Esophagus squamous epithelium (tissue), 5 donors: ENCODE measurements at regions of chr2 and their contacts with region 1.

Region 1: GRCh38 chr2:73984203-73984921 is at the start of gene TET3:
- DNase-seq: no peak
- H3K4me3 ChIP-seq: peak within 1 kb of the TSS; percentile 71 to 89 (median 78)
- H3K27ac ChIP-seq: peak within 1 kb of the TSS; percentile 91 to 99 (median 97)
- H3K4me1 ChIP-seq: peaks cover 63 to 91% (median 67%) of the 10 kb centered on the region in 3 donors
- H3K27me3 ChIP-seq: no peaks in the 10 kb centered on the region
- CTCF ChIP-seq: no peak
- POLR2A ChIP-seq: no peak
- total RNA-seq, gene TET3: 6.6 to 20.2 (median 16.2) TPM

Region 2: GRCh38 chr2:73896362-73897239 is 87.8 kb before region 1 on chr2:
- intact Hi-C with region 1: no loop called
- DNase-seq: no peak
- H3K4me3 ChIP-seq: peak overlapping the region; percentile 12 to 58 (median 41)
- H3K27ac ChIP-seq: peak overlapping the region; percentile 47 to 86 (median 80)
- H3K4me1 ChIP-seq: peaks cover 0 to 10% (median 0%) of the 10 kb centered on the region in 3 donors
- H3K27me3 ChIP-seq: no peaks in the 10 kb centered on the region
- CTCF ChIP-seq: no peak
- POLR2A ChIP-seq: no peak

Region 3: GRCh38 chr2:73907840-73908452 is 76.4 kb before region 1 on chr2:
- intact Hi-C with region 1: no loop called
- DNase-seq: no peak
- H3K4me3 ChIP-seq: no peak overlapping the region
- H3K27ac ChIP-seq: peak overlapping the region in 2 of 4 donors; percentile 44 to 47
- H3K4me1 ChIP-seq: peaks cover 0 to 16% (median 3%) of the 10 kb centered on the region in 3 donors
- H3K27me3 ChIP-seq: no peaks in the 10 kb centered on the region
- CTCF ChIP-seq: peak in 3 of 6 experiments; percentile 16 to 38 (median 18)
- POLR2A ChIP-seq: no peak

Region 4: DNA sequence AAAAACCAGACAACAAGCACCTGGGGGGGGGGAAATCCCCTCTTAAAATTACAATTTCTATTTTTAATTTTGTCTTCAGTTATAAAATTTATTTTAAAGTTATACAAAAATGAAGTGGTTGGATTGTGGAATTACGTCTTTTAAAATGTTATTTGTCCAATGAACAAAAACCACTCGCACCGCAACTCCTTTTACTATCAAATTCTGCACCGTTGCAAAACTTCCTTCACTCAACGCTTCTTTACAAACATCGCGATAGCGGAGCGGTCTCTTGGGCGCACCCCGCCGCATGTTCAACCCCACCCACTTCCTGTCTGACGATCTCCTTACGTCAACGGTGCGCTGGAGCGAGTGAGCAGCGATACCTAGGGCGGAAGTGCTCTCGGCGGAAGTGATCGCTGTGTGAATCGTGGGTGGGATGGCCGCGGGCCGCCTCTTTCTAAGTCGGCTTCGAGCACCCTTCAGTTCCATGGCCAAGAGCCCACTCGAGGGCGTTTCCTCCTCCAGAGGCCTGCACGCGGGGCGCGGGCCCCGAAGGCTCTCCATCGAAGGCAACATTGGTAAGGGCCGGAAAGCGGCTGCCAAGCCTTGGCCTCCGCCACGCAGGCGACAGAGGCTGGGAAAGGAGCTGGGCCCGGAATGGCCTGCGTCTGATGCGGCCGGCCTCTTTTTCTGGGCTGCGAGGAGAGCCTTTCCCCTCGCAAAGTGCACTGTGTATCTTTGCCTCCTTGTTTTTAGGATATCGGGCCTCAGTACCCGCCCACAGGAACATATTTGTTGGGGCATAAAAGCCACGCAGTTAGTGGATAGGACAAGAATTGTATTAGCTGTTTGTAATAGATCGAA is 57.6 kb before region 1 on chr2 and contains the start of gene DGUOK:
- intact Hi-C with region 1: loop called (anchors 5 kb)
- DNase-seq: peak; percentile 93
- H3K4me3 ChIP-seq: peak within 1 kb of the TSS; percentile 59 to 94 (median 88)
- H3K27ac ChIP-seq: peak within 1 kb of the TSS; percentile 96 to 100 (median 98)
- H3K4me1 ChIP-seq: peaks cover 8 to 62% (median 31%) of the 10 kb centered on the region in 3 donors
- H3K27me3 ChIP-seq: no peaks in the 10 kb centered on the region
- CTCF ChIP-seq: peak in 2 of 6 experiments; percentile 11 to 12
- POLR2A ChIP-seq: peak in 3 of 4 donors; percentile 91 to 96 (median 95)
- total RNA-seq, gene DGUOK: 23.5 to 53.4 (median 40.2) TPM

Region 5: DNA sequence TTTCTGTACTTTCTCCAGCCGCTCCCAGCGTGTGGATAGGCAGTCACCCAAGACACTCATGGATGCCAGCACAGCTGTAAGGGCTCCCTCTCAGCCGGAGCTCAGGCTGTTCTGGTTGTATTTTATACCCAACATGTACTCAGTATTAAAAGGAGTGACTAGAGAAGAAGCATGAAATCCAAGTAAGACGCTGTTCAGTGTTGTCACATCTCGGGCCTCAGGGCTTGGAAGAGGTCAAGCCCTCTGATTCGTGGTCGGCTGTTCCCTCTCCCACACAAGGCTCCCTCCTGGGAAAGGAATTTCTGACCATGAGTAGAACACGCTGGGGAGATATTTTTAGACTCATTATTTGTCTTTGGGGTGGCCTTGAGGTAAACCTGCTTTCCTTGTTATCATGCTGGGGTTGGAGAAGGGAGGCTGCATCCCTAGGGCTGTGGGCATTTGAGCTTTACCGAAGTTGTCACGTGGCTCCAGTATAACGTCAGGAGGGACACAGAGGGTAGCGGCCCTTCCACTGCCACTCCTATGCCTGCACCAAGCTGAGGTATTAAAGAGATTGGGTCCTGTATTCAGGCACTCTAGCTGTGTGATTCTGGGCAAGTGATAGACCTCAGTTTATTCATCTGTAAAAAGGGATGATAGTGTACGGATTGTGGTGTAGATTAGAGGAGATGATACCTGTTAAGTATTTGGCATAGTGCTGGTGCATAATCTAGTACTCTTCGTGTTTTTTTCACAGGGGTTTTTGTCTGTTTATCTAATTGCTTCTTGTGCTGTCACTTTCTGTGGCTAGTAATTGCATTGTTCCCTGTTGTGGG is 883.7 kb after region 1 on chr2:
- intact Hi-C with region 1: no loop called
- DNase-seq: no peak
- H3K4me3 ChIP-seq: no peak overlapping the region
- H3K27ac ChIP-seq: peak overlapping the region in 1 of 4 donors; percentile 32
- H3K4me1 ChIP-seq: no peaks in the 10 kb centered on the region
- H3K27me3 ChIP-seq: no peaks in the 10 kb centered on the region
- CTCF ChIP-seq: no peak
- POLR2A ChIP-seq: no peak